Right cardiac atrium (tissue), 5 donors: ENCODE measurements at regions of chr1 and their contacts with region 1.

Region 1: GRCh38 chr1:35451125-35451528 is 106.1 kb downstream of the KIAA0319L start:
- DNase-seq: peak; percentile 84 to 95 (median 92)
- ATAC-seq: peak; percentile 85 to 89
- H3K4me3 ChIP-seq: no peak overlapping the region
- H3K27ac ChIP-seq: no peak overlapping the region
- H3K4me1 ChIP-seq: peaks cover 10% of the 10 kb centered on the region
- H3K27me3 ChIP-seq: no peaks in the 10 kb centered on the region

Region 2: GRCh38 chr1:35544978-35545377 is 93.9 kb after region 1 on chr1:
- intact Hi-C with region 1: loop called in 1 of 4 experiments (anchors 5 kb)
- DNase-seq: peak; percentile 46 to 68 (median 59)
- ATAC-seq: peak; percentile 67 to 70
- H3K4me3 ChIP-seq: no peak overlapping the region
- H3K27ac ChIP-seq: no peak overlapping the region
- H3K4me1 ChIP-seq: peaks cover 2% of the 10 kb centered on the region
- H3K27me3 ChIP-seq: no peaks in the 10 kb centered on the region